ENCODE measurements at regions of chr1 and their contacts with region 1.

Region 1: GRCh38 chr1:90989990-90990389 is 31.8 kb downstream of the ZNF644 start:
- DNase-seq: peak; percentile 29
- ATAC-seq: no peak
- H3K4me3 ChIP-seq: no peak overlapping the region
- H3K4me3 Mint-ChIP-seq: peak overlapping the region; percentile 40
- H3K27ac ChIP-seq: peak overlapping the region; percentile 39 to 75
- H3K27ac Mint-ChIP-seq: peak overlapping the region; percentile 37
- H3K4me1 ChIP-seq: peaks cover 31 to 61% of the 10 kb centered on the region in 2 donors
- H3K4me1 Mint-ChIP-seq: peaks cover 84% of the 10 kb centered on the region
- H3K27me3 ChIP-seq: no peaks in the 10 kb centered on the region
- H3K27me3 Mint-ChIP-seq: no peaks in the 10 kb centered on the region
- CTCF ChIP-seq: no peak

Region 2: GRCh38 chr1:90534663-90535295 is 455.2 kb before region 1 on chr1:
- CTCF ChIA-PET with region 1: no interaction called
- POLR2A ChIA-PET with region 1: no interaction called
- intact Hi-C with region 1: no loop called
- DNase-seq: no peak
- ATAC-seq: no peak
- H3K4me3 ChIP-seq: no peak overlapping the region
- H3K4me3 Mint-ChIP-seq: no peak overlapping the region
- H3K27ac ChIP-seq: no peak overlapping the region
- H3K27ac Mint-ChIP-seq: no peak overlapping the region
- H3K4me1 ChIP-seq: no peaks in the 10 kb centered on the region
- H3K4me1 Mint-ChIP-seq: no peaks in the 10 kb centered on the region
- H3K27me3 ChIP-seq: no peaks in the 10 kb centered on the region
- H3K27me3 Mint-ChIP-seq: peaks cover 4% of the 10 kb centered on the region
- CTCF ChIP-seq: no peak

Region 3: GRCh38 chr1:90952906-90953305 is 37.1 kb before region 1 on chr1:
- CTCF ChIA-PET with region 1: no interaction called
- POLR2A ChIA-PET with region 1: no interaction called
- intact Hi-C with region 1: no loop called
- DNase-seq: no peak
- ATAC-seq: no peak
- H3K4me3 ChIP-seq: no peak overlapping the region
- H3K4me3 Mint-ChIP-seq: no peak overlapping the region
- H3K27ac ChIP-seq: no peak overlapping the region
- H3K27ac Mint-ChIP-seq: no peak overlapping the region
- H3K4me1 ChIP-seq: peaks cover 6 to 12% of the 10 kb centered on the region in 2 donors
- H3K4me1 Mint-ChIP-seq: peaks cover 70% of the 10 kb centered on the region
- H3K27me3 ChIP-seq: no peaks in the 10 kb centered on the region
- H3K27me3 Mint-ChIP-seq: no peaks in the 10 kb centered on the region
- CTCF ChIP-seq: no peak

Region 4: DNA sequence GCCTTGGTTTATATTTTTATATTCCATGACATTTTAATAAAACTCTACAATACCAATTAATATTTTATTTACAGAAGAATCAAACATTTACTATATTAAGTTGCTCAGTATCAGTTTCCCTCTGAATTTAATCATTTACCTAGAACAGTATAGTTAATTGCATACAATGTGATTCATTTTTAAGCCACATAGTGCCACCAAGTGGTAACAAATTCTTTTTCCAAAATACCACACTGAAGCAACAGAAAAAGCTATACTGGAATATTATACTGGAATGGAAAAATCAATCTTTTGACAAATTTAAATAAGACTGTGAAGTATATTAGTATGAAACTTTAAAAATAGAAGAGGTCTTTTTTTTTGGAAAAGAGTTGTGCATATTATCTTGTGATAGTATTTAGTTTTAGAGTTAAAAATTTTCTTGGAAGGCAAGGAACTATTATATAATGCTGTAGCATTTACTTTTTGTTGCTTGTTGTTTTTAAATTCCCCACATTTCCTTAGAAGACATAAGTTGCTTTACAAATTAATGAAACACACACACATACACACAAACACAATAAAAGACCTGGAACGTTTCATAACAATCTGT is 25.4 kb before region 1 on chr1:
- CTCF ChIA-PET with region 1: no interaction called
- POLR2A ChIA-PET with region 1: no interaction called
- intact Hi-C with region 1: no loop called
- DNase-seq: no peak
- ATAC-seq: no peak
- H3K4me3 ChIP-seq: no peak overlapping the region
- H3K4me3 Mint-ChIP-seq: no peak overlapping the region
- H3K27ac ChIP-seq: no peak overlapping the region
- H3K27ac Mint-ChIP-seq: no peak overlapping the region
- H3K4me1 ChIP-seq: no peaks in the 10 kb centered on the region
- H3K4me1 Mint-ChIP-seq: peaks cover 48% of the 10 kb centered on the region
- H3K27me3 ChIP-seq: no peaks in the 10 kb centered on the region
- H3K27me3 Mint-ChIP-seq: no peaks in the 10 kb centered on the region
- CTCF ChIP-seq: peak; percentile 12

Region 5: DNA sequence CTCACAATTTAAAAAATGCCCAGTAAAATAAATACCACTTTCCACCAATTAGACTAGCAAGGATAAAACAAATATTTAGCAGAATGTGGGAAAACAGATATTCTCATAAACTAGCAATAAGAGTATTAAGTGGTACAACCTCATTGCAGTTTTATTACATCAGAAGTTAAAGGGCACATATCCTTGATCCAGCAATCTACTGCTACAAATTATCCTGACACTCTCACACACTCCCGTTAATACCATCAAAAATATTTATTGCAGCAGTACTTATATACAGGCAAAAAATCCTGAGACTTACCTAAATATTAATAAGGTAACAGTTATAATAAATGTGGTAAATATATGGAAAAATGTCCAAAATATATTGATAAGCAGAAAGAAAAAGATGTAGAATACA is 12.5 kb before region 1 on chr1:
- CTCF ChIA-PET with region 1: no interaction called
- POLR2A ChIA-PET with region 1: no interaction called
- intact Hi-C with region 1: loop called (anchors 2 kb)
- DNase-seq: no peak
- ATAC-seq: no peak
- H3K4me3 ChIP-seq: no peak overlapping the region
- H3K4me3 Mint-ChIP-seq: no peak overlapping the region
- H3K27ac ChIP-seq: no peak overlapping the region
- H3K27ac Mint-ChIP-seq: no peak overlapping the region
- H3K4me1 ChIP-seq: no peaks in the 10 kb centered on the region
- H3K4me1 Mint-ChIP-seq: peaks cover 15% of the 10 kb centered on the region
- H3K27me3 ChIP-seq: no peaks in the 10 kb centered on the region
- H3K27me3 Mint-ChIP-seq: no peaks in the 10 kb centered on the region
- CTCF ChIP-seq: no peak

Measured in B cell (primary cell).